ENCODE measurements at regions of chr3 and their contacts with region 1.

Region 1: GRCh38 chr3:16378920-16379319 is 113.9 kb downstream of the OXNAD1 start:
- DNase-seq: peak; percentile 59
- CTCF ChIP-seq: no peak

Region 2: DNA sequence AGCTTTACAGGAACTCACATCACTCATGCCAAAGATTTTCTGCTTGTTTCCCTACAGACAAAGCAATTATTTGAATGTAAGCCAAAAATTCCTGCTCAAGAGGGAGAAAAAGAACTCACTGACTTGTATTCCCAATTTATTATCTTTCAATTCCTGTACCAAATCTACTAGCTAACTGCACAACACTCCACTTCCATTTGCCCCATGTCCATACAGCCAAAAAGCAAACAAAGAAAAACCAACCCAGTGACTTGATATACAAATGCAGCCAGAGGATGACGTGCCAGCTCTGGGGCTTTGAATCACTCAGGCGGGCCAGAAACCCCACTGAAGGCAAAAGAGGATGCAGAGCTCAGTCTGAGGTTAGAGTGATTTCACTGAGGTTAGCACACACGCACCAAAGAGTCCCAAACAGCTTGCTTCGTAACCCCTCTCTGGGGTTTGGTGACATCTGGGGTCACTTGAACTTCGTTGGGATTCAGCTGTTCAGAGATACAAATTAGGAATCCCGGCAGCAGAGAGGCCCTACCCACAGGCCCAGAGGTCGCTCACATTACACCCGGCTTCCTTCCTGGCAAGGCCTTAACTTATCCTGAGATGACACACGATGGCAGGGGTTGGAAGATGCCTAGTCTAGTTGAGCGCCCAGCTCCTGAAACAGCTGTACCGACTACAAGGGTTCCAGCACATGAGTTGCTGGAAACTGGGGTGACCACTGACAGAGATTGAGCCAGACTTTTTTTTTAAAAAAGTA is 132.9 kb after region 1 on chr3:
- in situ Hi-C with region 1: loop called (anchors 10 kb)
- DNase-seq: peak; percentile 75
- CTCF ChIP-seq: no peak

Region 3: DNA sequence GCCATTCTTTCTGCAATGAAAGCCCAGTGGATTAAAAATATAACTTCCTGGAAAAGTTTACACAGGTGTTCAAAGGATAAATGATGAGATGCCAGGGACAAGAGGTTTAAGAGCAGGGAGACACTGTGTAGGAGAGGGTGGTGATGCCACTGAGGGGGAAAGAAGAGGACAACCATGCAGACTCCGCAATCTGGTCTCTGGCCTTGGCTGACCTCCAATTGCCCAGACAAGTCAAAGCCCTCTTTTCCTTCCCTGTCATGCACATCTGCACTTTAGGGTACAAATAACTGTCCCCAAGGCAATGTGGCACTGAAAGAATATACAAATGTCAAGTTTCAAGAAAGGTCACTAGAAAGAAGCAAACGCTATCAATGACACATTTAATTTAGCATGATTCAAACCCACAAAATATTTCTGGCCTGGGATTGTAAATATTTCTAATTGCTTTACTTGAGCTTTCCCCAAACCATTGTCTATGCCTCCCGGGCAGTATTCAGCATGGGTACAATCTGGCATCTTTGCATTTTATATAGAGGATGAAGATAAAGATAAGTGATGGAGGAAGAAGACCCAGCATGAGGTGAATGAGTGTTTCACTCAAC is 825.2 kb after region 1 on chr3:
- in situ Hi-C with region 1: no loop called
- DNase-seq: no peak
- CTCF ChIP-seq: no peak